H1 (cell line): ENCODE measurements at regions of chr11 and their contacts with region 1.

Region 1: DNA sequence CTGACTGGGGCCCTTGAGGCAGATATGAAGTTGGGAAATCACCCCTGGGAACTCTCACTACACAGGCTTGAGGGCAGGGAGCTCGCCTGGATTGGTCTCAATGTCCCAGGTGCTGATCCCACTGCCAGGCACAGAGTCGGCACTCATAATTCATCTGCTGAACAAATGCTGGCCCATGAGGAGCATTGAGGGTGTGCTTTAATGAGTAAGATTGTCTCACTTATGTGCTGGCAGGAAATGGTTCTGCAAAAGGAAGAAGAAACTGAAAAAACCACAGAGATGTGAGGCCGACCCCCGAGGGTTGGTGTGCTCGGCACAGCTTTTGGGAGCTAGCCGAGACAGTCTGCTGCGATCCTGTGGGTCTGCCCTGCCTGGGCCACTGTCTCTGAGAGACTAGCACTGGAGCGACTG is 9.4 kb downstream of the PLAAT2 start:
- DNase-seq: no peak
- H3K4me3 ChIP-seq: no peak overlapping the region
- H3K27ac ChIP-seq: no peak overlapping the region
- H3K4me1 ChIP-seq: peaks cover 0 to 6% (median 2%) of the 10 kb centered on the region in 4 experiments; a peak in 3 of 7 replicates
- H3K27me3 ChIP-seq: no peaks in the 10 kb centered on the region
- CTCF ChIP-seq: no peak
- EP300 ChIP-seq: no peak
- POLR2A ChIP-seq: no peak
- RAD21 ChIP-seq: no peak

Region 2: DNA sequence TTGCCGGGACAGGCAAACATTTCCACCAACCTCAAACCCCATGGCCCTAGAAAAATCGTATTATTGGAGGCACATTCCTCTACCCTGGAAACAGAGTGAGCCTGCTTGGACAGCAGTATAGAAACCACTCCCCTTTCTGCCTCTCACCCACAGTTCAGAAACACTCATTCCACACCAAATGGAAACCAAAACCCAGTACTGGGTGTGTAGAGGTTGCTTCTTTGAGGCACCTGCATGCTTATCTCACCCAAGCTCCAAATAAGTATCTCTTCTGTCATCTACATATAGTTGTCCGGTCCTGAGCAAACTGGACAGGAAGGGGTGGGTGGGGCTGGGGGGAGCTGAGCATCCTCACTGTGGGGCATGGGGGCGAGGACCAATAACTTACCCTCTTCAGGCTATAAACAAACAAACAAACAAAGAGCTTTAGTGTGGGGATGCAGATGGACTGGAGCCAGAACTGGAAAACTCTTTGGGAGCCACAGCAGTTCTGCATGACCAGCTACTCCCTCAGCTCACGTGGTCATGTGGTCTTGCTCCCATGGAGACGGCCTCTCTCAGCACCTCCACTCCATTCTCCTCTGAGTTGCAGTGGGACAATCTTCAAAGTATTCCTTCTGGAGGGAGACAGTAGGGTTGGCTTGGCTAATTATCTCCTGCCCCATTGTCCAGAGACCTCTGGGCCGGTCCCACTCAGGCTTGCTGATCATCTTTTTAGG is 10.5 kb after region 1 on chr11:
- CTCF ChIA-PET with region 1: interaction called, 6 read pairs
- POLR2A ChIA-PET with region 1: interaction called, 12 read pairs
- DNase-seq: no peak
- H3K4me3 ChIP-seq: no peak overlapping the region
- H3K27ac ChIP-seq: no peak overlapping the region; the same call in 1 of the 2 replicates
- H3K4me1 ChIP-seq: peaks cover 0 to 5% (median 3%) of the 10 kb centered on the region in 4 experiments; a peak in 3 of 7 replicates
- H3K27me3 ChIP-seq: no peaks in the 10 kb centered on the region
- CTCF ChIP-seq: no peak
- EP300 ChIP-seq: no peak
- POLR2A ChIP-seq: no peak
- RAD21 ChIP-seq: no peak